Thyroid gland (tissue), 4 donors: ENCODE measurements at regions of chr7 and their contacts with region 1.

Region 1: GRCh38 chr7:322111-322671 is 32.2 kb downstream of the FOXL3 start:
- DNase-seq: peak; percentile 74 to 80
- H3K4me3 ChIP-seq: no peak overlapping the region
- H3K27ac ChIP-seq: no peak overlapping the region
- H3K4me1 ChIP-seq: no peaks in the 10 kb centered on the region
- H3K27me3 ChIP-seq: no peaks in the 10 kb centered on the region
- CTCF ChIP-seq: peak; percentile 39 to 98 (median 86)
- POLR2A ChIP-seq: no peak

Region 2: GRCh38 chr7:519484-520390 is 197.5 kb after region 1 on chr7 and contains the start of gene PDGFA:
- intact Hi-C with region 1: loop called (anchors 10 kb)
- DNase-seq: peak; percentile 50 to 52
- H3K4me3 ChIP-seq: peak within 1 kb of the TSS; percentile 15 to 66 (median 42)
- H3K27ac ChIP-seq: peak within 1 kb of the TSS; percentile 39 to 78 (median 67)
- H3K4me1 ChIP-seq: peaks cover 39 to 44% of the 10 kb centered on the region in 2 donors
- H3K27me3 ChIP-seq: peaks cover 18% of the 10 kb centered on the region
- CTCF ChIP-seq: peak in 3 of 6 experiments; percentile 22 to 27 (median 25)
- POLR2A ChIP-seq: no peak
- total RNA-seq, gene PDGFA: 6.6 to 20.0 (median 10.8) TPM

Region 3: DNA sequence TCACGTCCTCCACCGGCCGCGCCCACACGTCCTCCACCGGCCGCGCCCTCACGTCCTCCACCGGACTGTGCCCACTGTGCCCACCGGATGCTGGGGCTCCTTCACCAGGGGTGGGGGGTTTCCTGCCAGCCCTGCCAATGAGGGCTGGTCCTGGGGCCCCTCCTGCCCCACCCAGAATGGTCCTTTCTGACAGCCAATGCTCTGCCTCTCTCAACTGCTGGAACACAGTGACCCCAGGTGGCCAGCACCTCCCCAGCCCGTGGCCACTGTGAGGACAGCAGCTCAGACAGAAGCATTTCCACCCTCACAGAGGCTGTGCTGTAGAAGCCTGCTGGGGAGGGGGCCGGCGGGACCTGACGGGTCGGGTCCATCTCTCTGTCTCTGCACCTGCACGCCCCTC is 314.2 kb after region 1 on chr7:
- intact Hi-C with region 1: loop called (anchors 10 kb)
- DNase-seq: no peak
- H3K4me3 ChIP-seq: no peak overlapping the region
- H3K27ac ChIP-seq: no peak overlapping the region
- H3K4me1 ChIP-seq: no peaks in the 10 kb centered on the region
- H3K27me3 ChIP-seq: no peaks in the 10 kb centered on the region
- CTCF ChIP-seq: peak in 1 of 6 experiments; percentile 15
- POLR2A ChIP-seq: no peak

Region 4: DNA sequence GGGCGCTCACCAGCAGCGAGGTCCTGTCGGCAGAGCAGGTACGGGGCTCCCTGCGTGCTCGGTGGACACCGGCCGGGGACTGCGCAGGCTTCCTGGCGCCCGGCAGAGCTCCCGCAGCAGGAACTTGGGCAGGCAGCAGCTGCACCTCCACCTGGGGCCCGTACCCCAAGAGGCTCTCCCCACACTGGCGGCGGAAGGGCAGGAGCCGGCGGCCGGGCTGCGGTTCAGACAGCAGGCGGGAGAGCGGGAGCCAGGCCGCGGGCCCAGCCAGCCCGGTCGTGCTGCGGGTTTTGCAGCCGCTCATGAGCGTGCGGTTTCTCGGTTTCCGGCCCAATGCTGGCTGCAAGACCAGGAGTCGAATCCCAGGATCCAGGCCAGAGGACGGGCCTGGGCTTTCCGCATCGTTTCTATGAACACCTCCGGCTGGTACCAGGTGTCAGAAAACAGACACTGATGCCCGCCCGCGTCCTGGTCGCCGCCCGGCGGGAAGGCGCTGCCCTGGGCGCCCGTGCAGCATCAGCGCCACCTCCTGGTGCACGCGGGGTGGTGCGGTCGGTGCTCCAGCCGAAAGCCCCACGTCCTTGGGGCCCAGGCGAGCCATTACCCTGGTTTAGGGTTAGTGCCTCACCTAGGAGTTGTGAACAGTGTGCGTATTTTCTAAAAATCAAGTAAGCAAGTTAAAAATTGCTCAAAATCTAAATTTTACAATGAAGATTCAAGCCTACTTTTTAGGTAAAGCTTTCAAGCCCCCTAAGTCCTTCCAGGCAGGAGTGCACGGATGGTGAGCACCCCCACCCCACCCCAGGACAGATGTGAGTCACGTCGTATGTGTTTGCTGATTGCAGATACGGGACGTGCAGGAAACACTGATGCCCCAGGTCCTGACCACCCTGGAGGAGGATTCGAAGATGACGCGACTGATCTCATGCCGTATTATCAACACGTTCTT is 452.2 kb after region 1 on chr7:
- intact Hi-C with region 1: loop called (anchors 5 kb)
- DNase-seq: peak; percentile 42 to 45
- H3K4me3 ChIP-seq: no peak overlapping the region
- H3K27ac ChIP-seq: no peak overlapping the region
- H3K4me1 ChIP-seq: peaks cover 0 to 10% of the 10 kb centered on the region in 2 donors
- H3K27me3 ChIP-seq: no peaks in the 10 kb centered on the region
- CTCF ChIP-seq: peak; percentile 38 to 90 (median 58)
- POLR2A ChIP-seq: no peak

Region 5: GRCh38 chr7:873367-874002 is 551.3 kb after region 1 on chr7:
- intact Hi-C with region 1: loop called (anchors 5 kb)
- DNase-seq: peak; percentile 88 to 89
- H3K4me3 ChIP-seq: no peak overlapping the region
- H3K27ac ChIP-seq: peak overlapping the region in 2 of 3 donors; percentile 24 to 40
- H3K4me1 ChIP-seq: peaks cover 13 to 23% of the 10 kb centered on the region in 2 donors
- H3K27me3 ChIP-seq: no peaks in the 10 kb centered on the region
- CTCF ChIP-seq: peak; percentile 83 to 98 (median 94)
- POLR2A ChIP-seq: no peak

Region 6: GRCh38 chr7:974820-975681 is 652.9 kb after region 1 on chr7 and contains the start of gene COX19:
- intact Hi-C with region 1: loop called (anchors 10 kb)
- DNase-seq: peak; percentile 84 to 88
- H3K4me3 ChIP-seq: peak within 1 kb of the TSS; percentile 96 to 100 (median 99)
- H3K27ac ChIP-seq: peak within 1 kb of the TSS; percentile 85 to 96 (median 88)
- H3K4me1 ChIP-seq: peaks cover 21 to 22% of the 10 kb centered on the region in 2 donors
- H3K27me3 ChIP-seq: no peaks in the 10 kb centered on the region
- CTCF ChIP-seq: no peak
- POLR2A ChIP-seq: peak; percentile 29 to 72
- total RNA-seq, gene COX19: 8.2 to 28.2 (median 17.8) TPM